ENCODE measurements at regions of chr1 and their contacts with region 1.

Region 1: GRCh38 chr1:7961216-7962015 is at the start of gene PARK7:
- DNase-seq: peak; percentile 100
- ATAC-seq: peak; percentile 98
- H3K4me3 Mint-ChIP-seq: peak within 1 kb of the TSS; percentile 97
- H3K27ac Mint-ChIP-seq: peak within 1 kb of the TSS; percentile 99
- H3K4me1 Mint-ChIP-seq: peaks cover 60% of the 10 kb centered on the region
- H3K27me3 Mint-ChIP-seq: no peaks in the 10 kb centered on the region
- total RNA-seq, gene PARK7: 296 to 302 TPM

Region 2: GRCh38 chr1:7948960-7949359 is 12.5 kb before region 1 on chr1:
- CTCF ChIA-PET with region 1: no interaction called
- POLR2A ChIA-PET with region 1: interaction called, 15 read pairs
- DNase-seq: peak; percentile 66
- ATAC-seq: peak; percentile 66
- H3K4me3 Mint-ChIP-seq: peak overlapping the region; percentile 16
- H3K27ac Mint-ChIP-seq: no peak overlapping the region
- H3K4me1 Mint-ChIP-seq: peaks cover 28% of the 10 kb centered on the region
- H3K27me3 Mint-ChIP-seq: no peaks in the 10 kb centered on the region

Measured in activated CD8-positive, alpha-beta T cell treated with anti-CD3 and anti-CD28 coated beads, Interleukin-2, amount 10 ng/mL, durations not matched to agents 7 days and 5 days (primary cell).